Caco-2 (cell line): ENCODE measurements at regions of chr14 and their contacts with region 1.

Region 1: GRCh38 chr14:22986508-22987054 is 4.2 kb upstream of the AJUBA start:
- DNase-seq: peak; percentile 86 to 87
- H3K4me3 ChIP-seq: no peak overlapping the region
- H3K4me3 Mint-ChIP-seq: no peak overlapping the region
- H3K27ac Mint-ChIP-seq: no peak overlapping the region
- H3K4me1 ChIP-seq: peaks cover 11% of the 10 kb centered on the region
- H3K4me1 Mint-ChIP-seq: no peaks in the 10 kb centered on the region
- H3K27me3 ChIP-seq: no peaks in the 10 kb centered on the region
- H3K27me3 Mint-ChIP-seq: no peaks in the 10 kb centered on the region
- CTCF ChIP-seq: peak; percentile 80 to 91

Region 2: GRCh38 chr14:22852940-22853767 is 133.4 kb before region 1 on chr14:
- CTCF ChIA-PET with region 1: no interaction called
- POLR2A ChIA-PET with region 1: no interaction called
- intact Hi-C with region 1: no loop called
- DNase-seq: peak; percentile 89 to 92
- H3K4me3 ChIP-seq: peak overlapping the region; percentile 35
- H3K4me3 Mint-ChIP-seq: peak overlapping the region; percentile 69
- H3K27ac Mint-ChIP-seq: peak overlapping the region; percentile 68
- H3K4me1 ChIP-seq: peaks cover 25% of the 10 kb centered on the region
- H3K4me1 Mint-ChIP-seq: peaks cover 7% of the 10 kb centered on the region
- H3K27me3 ChIP-seq: no peaks in the 10 kb centered on the region
- H3K27me3 Mint-ChIP-seq: no peaks in the 10 kb centered on the region
- CTCF ChIP-seq: peak; percentile 87 to 91

Region 3: GRCh38 chr14:22872033-22872832 is 114.3 kb before region 1 on chr14:
- CTCF ChIA-PET with region 1: interaction called, 3 read pairs
- POLR2A ChIA-PET with region 1: no interaction called
- intact Hi-C with region 1: loop called (anchors 5 kb)
- DNase-seq: peak; percentile 82 to 86
- H3K4me3 ChIP-seq: peak overlapping the region; percentile 91
- H3K4me3 Mint-ChIP-seq: peak overlapping the region; percentile 82
- H3K27ac Mint-ChIP-seq: peak overlapping the region; percentile 92
- H3K4me1 ChIP-seq: peaks cover 9% of the 10 kb centered on the region; the same call in 1 of the 2 replicates
- H3K4me1 Mint-ChIP-seq: peaks cover 8% of the 10 kb centered on the region
- H3K27me3 ChIP-seq: no peaks in the 10 kb centered on the region
- H3K27me3 Mint-ChIP-seq: no peaks in the 10 kb centered on the region
- CTCF ChIP-seq: peak; percentile 86 to 89

Region 4: GRCh38 chr14:22966783-22967269 is 19.8 kb before region 1 on chr14:
- CTCF ChIA-PET with region 1: interaction called, 68 read pairs
- POLR2A ChIA-PET with region 1: interaction called, 35 read pairs
- intact Hi-C with region 1: no loop called
- DNase-seq: no peak
- H3K4me3 ChIP-seq: no peak overlapping the region
- H3K4me3 Mint-ChIP-seq: no peak overlapping the region
- H3K27ac Mint-ChIP-seq: peak overlapping the region; percentile 68
- H3K4me1 ChIP-seq: peaks cover 20% of the 10 kb centered on the region
- H3K4me1 Mint-ChIP-seq: peaks cover under 1% of the 10 kb centered on the region
- H3K27me3 ChIP-seq: no peaks in the 10 kb centered on the region
- H3K27me3 Mint-ChIP-seq: no peaks in the 10 kb centered on the region
- CTCF ChIP-seq: no peak

Region 5: DNA sequence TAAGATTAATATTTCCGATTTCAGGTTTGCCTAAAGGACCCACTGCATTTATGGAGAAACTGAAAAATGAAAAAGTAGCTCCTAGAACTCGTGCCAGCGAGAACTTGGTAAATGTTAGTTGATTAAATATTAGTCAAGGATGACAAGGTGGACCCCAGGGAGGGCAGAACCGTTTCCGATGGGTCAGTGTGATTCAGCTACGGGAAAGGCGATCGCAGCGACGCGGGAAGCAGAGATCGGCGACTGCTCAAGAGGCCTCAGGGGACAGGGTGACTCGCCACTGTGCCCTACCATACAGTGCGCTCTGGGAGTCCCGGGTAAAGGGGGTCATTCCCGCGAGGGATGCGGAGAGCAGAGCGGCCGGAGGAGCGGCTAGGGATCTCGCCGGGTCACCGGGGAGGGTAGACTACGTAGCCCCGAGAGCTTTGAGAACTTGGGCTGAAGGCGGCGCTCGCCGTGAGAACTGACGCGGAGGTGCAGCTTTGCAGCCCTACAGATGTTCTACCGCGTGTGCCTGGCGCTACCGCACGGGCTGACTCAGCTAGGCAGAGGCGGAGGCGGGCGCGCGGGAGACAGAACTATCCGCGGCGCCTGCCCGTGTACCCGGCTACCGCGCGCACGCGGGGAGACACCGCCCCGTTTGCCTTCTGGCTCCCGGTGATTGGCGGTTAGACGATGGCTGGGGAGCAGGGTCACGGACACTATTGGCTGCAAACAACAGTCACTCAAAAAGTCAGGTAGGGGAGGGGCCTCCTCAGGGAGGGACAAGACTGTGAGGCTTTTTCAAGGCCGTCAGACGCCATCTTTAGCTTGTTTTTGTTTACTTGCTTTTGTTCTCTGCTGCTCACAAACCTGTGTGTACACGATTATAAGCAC is 20.2 kb after region 1 on chr14:
- CTCF ChIA-PET with region 1: interaction called, 43 read pairs
- POLR2A ChIA-PET with region 1: interaction called, 13 read pairs
- intact Hi-C with region 1: no loop called
- DNase-seq: peak; percentile 97
- H3K4me3 ChIP-seq: peak overlapping the region; percentile 63
- H3K4me3 Mint-ChIP-seq: peak overlapping the region; percentile 100
- H3K27ac Mint-ChIP-seq: peak overlapping the region; percentile 99
- H3K4me1 ChIP-seq: peaks cover 14% of the 10 kb centered on the region
- H3K4me1 Mint-ChIP-seq: peaks cover 15% of the 10 kb centered on the region
- H3K27me3 ChIP-seq: no peaks in the 10 kb centered on the region
- H3K27me3 Mint-ChIP-seq: no peaks in the 10 kb centered on the region
- CTCF ChIP-seq: peak; percentile 13 to 44

Region 6: GRCh38 chr14:23057757-23058653 is 71.4 kb after region 1 on chr14:
- CTCF ChIA-PET with region 1: interaction called, 102 read pairs
- POLR2A ChIA-PET with region 1: interaction called, 6 read pairs
- intact Hi-C with region 1: loop called (anchors 1 kb)
- DNase-seq: peak; percentile 91 to 94
- H3K4me3 ChIP-seq: peak overlapping the region; percentile 56
- H3K4me3 Mint-ChIP-seq: peak overlapping the region; percentile 85
- H3K27ac Mint-ChIP-seq: peak overlapping the region; percentile 68
- H3K4me1 ChIP-seq: peaks cover 18% of the 10 kb centered on the region
- H3K4me1 Mint-ChIP-seq: peaks cover 23% of the 10 kb centered on the region
- H3K27me3 ChIP-seq: no peaks in the 10 kb centered on the region
- H3K27me3 Mint-ChIP-seq: no peaks in the 10 kb centered on the region
- CTCF ChIP-seq: peak; percentile 93 to 96

Region 7: DNA sequence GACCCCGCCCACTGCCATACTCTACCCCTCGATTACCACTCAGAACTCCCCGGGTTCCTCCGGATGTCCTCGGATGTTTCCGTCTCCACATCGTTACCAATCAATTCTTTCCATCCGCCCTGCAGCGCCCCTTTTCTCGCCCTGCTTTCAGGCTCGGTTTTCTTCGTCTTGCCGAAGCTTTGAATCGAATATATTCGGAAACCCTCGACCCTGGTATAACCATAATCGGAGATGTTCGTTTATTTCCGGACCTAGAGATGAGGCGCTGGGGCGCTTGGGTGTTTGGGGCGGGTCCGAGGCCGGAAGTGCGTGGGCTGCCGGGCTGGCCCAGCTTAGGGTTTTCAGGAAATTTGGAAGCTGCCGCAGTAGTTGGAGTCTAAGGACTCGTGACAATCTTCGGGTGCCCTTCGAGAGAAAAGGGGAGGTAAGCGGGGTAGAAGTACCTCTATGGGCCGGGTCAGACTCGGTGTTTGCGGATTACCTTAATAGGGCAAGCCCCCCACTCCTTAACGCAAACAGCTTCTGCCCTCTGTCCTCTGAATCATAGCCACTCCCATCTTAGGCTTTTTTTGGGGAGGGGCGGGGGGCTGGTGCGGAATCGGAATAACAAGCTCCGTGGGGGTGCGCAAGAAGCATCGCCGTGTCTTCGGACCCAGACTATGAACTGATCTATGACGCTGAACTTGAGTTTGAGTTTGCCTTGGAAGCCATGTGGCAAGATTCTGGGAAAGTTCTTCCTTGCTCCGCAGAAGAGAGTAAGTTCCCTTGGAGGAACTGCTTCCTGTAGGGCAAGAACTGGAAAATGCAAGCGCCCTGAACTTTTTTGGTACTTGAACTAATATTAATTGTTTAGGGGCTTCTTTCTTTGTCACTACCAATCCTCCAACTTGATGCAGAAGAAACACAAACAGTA is 108.9 kb after region 1 on chr14 and contains the start of gene C14orf119:
- CTCF ChIA-PET with region 1: interaction called, 15 read pairs
- POLR2A ChIA-PET with region 1: interaction called, 17 read pairs
- intact Hi-C with region 1: no loop called
- DNase-seq: peak; percentile 98 to 99
- H3K4me3 ChIP-seq: peak within 1 kb of the TSS; percentile 79
- H3K4me3 Mint-ChIP-seq: no peak within 1 kb of the TSS
- H3K27ac Mint-ChIP-seq: no peak within 1 kb of the TSS
- H3K4me1 ChIP-seq: peaks cover 3% of the 10 kb centered on the region; the same call in 1 of the 2 replicates
- H3K4me1 Mint-ChIP-seq: peaks cover 10% of the 10 kb centered on the region
- H3K27me3 ChIP-seq: no peaks in the 10 kb centered on the region
- H3K27me3 Mint-ChIP-seq: no peaks in the 10 kb centered on the region
- CTCF ChIP-seq: no peak
- total RNA-seq, gene C14orf119: 46.3 and 52.0 TPM in 2 replicates